ENCODE measurements at regions of chr14 and their contacts with region 1.

Region 1: DNA sequence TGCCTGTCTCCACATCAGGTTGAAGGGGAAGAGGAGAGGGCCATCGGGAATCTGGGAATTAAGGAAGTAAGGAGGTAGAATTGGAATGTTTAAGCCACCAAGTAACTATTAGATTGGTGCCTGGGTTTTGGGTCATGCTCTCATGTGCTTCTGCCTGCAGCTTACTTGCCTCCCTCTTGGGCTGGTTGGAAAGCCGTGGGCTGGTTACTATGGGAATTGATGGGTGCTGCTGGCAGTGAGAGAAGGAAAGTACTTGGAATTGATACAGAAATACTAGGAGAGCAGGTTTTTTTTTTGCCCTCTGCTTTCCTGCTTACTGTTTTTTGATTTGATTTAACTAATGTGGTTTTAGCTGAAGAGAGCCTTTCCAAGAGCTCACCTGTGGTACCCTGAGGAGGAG is 493.5 kb upstream of the RGS6 start:
- DNase-seq: no peak
- ATAC-seq: no peak
- H3K4me3 ChIP-seq: no peak overlapping the region
- H3K27ac ChIP-seq: no peak overlapping the region
- H3K4me1 ChIP-seq: no peaks in the 10 kb centered on the region; the same call in 1 of the 2 replicates
- H3K27me3 ChIP-seq: no peaks in the 10 kb centered on the region
- CTCF ChIP-seq: no peak

Region 2: GRCh38 chr14:71117839-71118743 is 320.6 kb before region 1 on chr14:
- CTCF ChIA-PET with region 1: no interaction called
- POLR2A ChIA-PET with region 1: no interaction called
- in situ Hi-C with region 1: no loop called
- intact Hi-C with region 1: no loop called
- DNase-seq: no peak
- ATAC-seq: no peak
- H3K4me3 ChIP-seq: no peak overlapping the region
- H3K27ac ChIP-seq: no peak overlapping the region
- H3K4me1 ChIP-seq: no peaks in the 10 kb centered on the region
- H3K27me3 ChIP-seq: no peaks in the 10 kb centered on the region
- CTCF ChIP-seq: no peak

Region 3: DNA sequence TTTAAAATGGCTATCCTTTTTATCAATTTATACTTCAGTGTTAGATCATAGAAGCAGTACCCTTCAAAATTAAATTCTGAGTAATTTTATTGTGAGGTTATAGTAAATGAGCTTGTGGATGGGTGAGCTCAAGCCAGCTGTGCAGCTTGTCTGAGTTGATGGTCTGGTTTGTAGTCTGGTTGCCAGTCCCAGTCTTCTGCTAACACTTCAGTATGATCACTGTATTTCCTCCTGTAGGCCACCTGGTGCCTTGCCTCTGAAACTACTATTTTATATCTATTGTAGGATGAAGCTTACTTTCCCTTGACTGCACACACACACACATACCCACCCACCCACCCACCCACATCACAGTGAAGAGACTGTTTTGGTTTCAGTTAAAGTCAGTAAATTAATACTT is 35.0 kb before region 1 on chr14:
- CTCF ChIA-PET with region 1: no interaction called
- POLR2A ChIA-PET with region 1: interaction called, 12 read pairs
- in situ Hi-C with region 1: no loop called
- intact Hi-C with region 1: no loop called
- DNase-seq: no peak
- ATAC-seq: no peak; the same call in 1 of the 2 replicates
- H3K4me3 ChIP-seq: no peak overlapping the region
- H3K27ac ChIP-seq: no peak overlapping the region
- H3K4me1 ChIP-seq: no peaks in the 10 kb centered on the region
- H3K27me3 ChIP-seq: no peaks in the 10 kb centered on the region
- CTCF ChIP-seq: peak; percentile 12; the same call in 1 of the 2 replicates

Region 4: GRCh38 chr14:71514941-71515919 is 76.5 kb after region 1 on chr14:
- CTCF ChIA-PET with region 1: interaction called, 11 read pairs
- POLR2A ChIA-PET with region 1: no interaction called
- in situ Hi-C with region 1: no loop called
- intact Hi-C with region 1: no loop called
- DNase-seq: no peak
- ATAC-seq: no peak
- H3K4me3 ChIP-seq: no peak overlapping the region
- H3K27ac ChIP-seq: no peak overlapping the region
- H3K4me1 ChIP-seq: no peaks in the 10 kb centered on the region
- H3K27me3 ChIP-seq: no peaks in the 10 kb centered on the region
- CTCF ChIP-seq: no peak